Activated CD8-positive, alpha-beta T cell treated with anti-CD3 and anti-CD28 coated beads for 36 hours (primary cell): ENCODE measurements at regions of chr3 and their contacts with region 1.

Region 1: GRCh38 chr3:13091898-13092611 is 18.8 kb upstream of the IQSEC1 start:
- DNase-seq: peak; percentile 89
- ATAC-seq: peak; percentile 96
- H3K4me3 Mint-ChIP-seq: no peak overlapping the region
- H3K27ac Mint-ChIP-seq: no peak overlapping the region
- H3K4me1 Mint-ChIP-seq: peaks cover 5% of the 10 kb centered on the region
- H3K27me3 Mint-ChIP-seq: no peaks in the 10 kb centered on the region
- CTCF ChIP-seq: peak; percentile 96

Region 2: GRCh38 chr3:12782172-12782815 is 309.8 kb before region 1 on chr3:
- CTCF ChIA-PET with region 1: no interaction called
- POLR2A ChIA-PET with region 1: no interaction called
- intact Hi-C with region 1: no loop called
- DNase-seq: peak; percentile 34
- ATAC-seq: no peak
- H3K4me3 Mint-ChIP-seq: no peak overlapping the region
- H3K27ac Mint-ChIP-seq: no peak overlapping the region
- H3K4me1 Mint-ChIP-seq: no peaks in the 10 kb centered on the region
- H3K27me3 Mint-ChIP-seq: peaks cover 10% of the 10 kb centered on the region
- CTCF ChIP-seq: no peak

Region 3: DNA sequence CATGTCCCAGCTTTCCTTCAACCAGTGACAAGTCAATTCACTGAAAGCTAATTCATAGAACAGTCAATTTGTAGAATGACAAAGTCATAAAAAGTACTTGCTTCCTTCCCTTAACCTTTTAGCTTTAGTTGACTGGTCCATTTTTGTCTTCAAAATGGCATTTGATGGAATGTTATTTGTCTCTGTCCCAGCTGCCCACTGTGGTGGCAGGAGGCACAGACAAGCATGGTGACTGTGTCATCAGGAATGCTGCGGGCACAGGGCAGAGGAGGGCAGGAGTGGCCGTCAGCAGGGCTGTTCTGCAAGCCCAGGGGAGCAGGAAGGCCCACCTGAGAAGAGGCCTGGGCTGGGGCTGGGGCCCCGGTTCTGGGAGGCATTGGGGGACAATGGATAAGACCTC is 28.8 kb before region 1 on chr3:
- CTCF ChIA-PET with region 1: interaction called, 13 read pairs
- POLR2A ChIA-PET with region 1: no interaction called
- intact Hi-C with region 1: no loop called
- DNase-seq: no peak
- ATAC-seq: no peak
- H3K4me3 Mint-ChIP-seq: no peak overlapping the region
- H3K27ac Mint-ChIP-seq: no peak overlapping the region
- H3K4me1 Mint-ChIP-seq: peaks cover 14% of the 10 kb centered on the region
- H3K27me3 Mint-ChIP-seq: no peaks in the 10 kb centered on the region
- CTCF ChIP-seq: no peak

Region 4: GRCh38 chr3:13106308-13107001 is 14.4 kb after region 1 on chr3:
- CTCF ChIA-PET with region 1: interaction called, 17 read pairs
- POLR2A ChIA-PET with region 1: interaction called, 3 read pairs
- intact Hi-C with region 1: no loop called
- DNase-seq: no peak
- ATAC-seq: no peak
- H3K4me3 Mint-ChIP-seq: no peak overlapping the region
- H3K27ac Mint-ChIP-seq: no peak overlapping the region
- H3K4me1 Mint-ChIP-seq: peaks cover 9% of the 10 kb centered on the region
- H3K27me3 Mint-ChIP-seq: no peaks in the 10 kb centered on the region
- CTCF ChIP-seq: no peak

Region 5: DNA sequence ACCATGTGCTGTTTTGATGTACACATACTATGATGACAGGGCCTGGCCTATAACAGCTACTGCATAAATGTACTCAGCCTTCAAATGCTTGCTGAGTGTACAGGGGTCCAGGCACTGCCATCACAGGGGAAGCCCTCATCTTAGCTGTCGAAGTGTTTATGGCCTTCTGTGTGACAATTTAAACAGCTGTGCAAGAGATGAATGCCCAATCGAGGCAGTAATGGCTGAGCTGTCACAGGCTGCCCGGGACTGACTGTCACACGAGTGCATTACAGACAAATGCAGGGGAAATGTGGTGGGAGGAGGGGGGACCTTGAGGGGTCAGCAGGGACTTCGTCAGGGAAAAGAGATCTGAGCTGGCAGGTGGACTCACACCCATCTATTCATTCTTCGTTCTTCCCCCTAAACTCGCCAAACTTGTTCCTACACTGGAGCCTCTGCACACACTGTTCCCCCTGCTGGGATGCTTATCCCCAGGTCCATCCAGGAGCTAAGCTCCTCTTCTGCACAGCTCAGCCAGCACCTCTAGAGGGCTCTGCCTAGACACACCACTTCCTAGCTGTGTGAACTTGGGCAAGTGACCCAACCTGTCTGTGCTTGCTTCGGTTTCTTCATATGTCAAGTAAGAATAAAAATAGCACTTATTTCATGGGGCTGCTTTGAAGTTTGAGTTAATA is 137.4 kb after region 1 on chr3:
- CTCF ChIA-PET with region 1: interaction called, 13 read pairs
- POLR2A ChIA-PET with region 1: no interaction called
- intact Hi-C with region 1: no loop called
- DNase-seq: peak; percentile 42
- ATAC-seq: peak; percentile 78
- H3K4me3 Mint-ChIP-seq: no peak overlapping the region
- H3K27ac Mint-ChIP-seq: no peak overlapping the region
- H3K4me1 Mint-ChIP-seq: peaks cover 9% of the 10 kb centered on the region
- H3K27me3 Mint-ChIP-seq: peaks cover 1% of the 10 kb centered on the region
- CTCF ChIP-seq: peak; percentile 33

Region 6: DNA sequence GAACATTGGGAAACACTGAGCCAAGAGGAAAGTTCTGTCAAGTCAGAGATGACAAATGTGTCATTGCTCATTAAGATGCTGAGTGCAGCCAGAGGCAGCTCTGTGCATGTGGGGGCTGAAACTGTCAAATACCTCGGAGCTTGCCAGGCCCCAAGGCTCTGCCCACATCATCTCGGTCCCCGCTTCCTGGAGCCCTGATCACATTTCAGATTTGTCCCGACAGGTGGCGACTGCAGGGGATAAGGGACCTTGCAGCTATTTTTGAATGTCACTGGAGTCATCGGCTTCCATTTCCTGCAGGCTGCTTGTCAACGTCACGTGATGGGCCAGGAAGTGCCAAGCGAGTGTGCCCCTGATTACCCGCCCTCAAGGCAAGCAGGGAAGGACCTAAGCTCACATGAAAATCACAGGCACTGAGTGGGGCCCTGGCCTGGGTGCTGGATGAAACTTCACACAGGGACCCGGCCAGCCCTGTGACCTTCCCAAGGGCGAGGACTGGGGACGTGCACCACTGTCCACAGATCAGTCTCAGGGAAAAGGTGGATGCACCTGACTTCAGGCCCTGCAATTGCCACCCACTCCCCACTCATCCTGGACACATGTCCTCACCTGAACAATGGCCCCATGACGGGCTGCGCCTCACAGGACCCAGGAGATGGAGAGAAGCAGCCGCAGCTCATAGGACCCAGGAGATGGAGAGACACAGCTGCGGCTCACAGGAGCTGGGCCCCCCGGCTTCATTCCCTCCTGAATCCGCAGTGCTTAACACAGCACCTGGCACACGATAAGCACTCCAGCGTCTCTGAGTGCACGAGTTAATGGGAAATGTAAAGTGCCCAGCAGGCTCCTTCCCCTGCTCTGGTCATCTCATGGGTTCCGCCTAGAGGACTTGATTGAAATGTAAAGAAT is 254.7 kb after region 1 on chr3:
- CTCF ChIA-PET with region 1: interaction called, 13 read pairs
- POLR2A ChIA-PET with region 1: no interaction called
- intact Hi-C with region 1: no loop called
- DNase-seq: peak; percentile 93
- ATAC-seq: peak; percentile 95
- H3K4me3 Mint-ChIP-seq: no peak overlapping the region
- H3K27ac Mint-ChIP-seq: peak overlapping the region; percentile 87
- H3K4me1 Mint-ChIP-seq: peaks cover 58% of the 10 kb centered on the region
- H3K27me3 Mint-ChIP-seq: no peaks in the 10 kb centered on the region
- CTCF ChIP-seq: peak; percentile 50

Region 7: GRCh38 chr3:13461169-13462158 is 369.4 kb after region 1 on chr3:
- CTCF ChIA-PET with region 1: interaction called, 14 read pairs
- POLR2A ChIA-PET with region 1: no interaction called
- intact Hi-C with region 1: loop called (anchors 10 kb)
- DNase-seq: peak; percentile 86
- ATAC-seq: peak; percentile 100
- H3K4me3 Mint-ChIP-seq: no peak overlapping the region
- H3K27ac Mint-ChIP-seq: no peak overlapping the region
- H3K4me1 Mint-ChIP-seq: no peaks in the 10 kb centered on the region
- H3K27me3 Mint-ChIP-seq: peaks cover 1% of the 10 kb centered on the region
- CTCF ChIP-seq: peak; percentile 97